ENCODE measurements at regions of chr2 and their contacts with region 1.

Region 1: DNA sequence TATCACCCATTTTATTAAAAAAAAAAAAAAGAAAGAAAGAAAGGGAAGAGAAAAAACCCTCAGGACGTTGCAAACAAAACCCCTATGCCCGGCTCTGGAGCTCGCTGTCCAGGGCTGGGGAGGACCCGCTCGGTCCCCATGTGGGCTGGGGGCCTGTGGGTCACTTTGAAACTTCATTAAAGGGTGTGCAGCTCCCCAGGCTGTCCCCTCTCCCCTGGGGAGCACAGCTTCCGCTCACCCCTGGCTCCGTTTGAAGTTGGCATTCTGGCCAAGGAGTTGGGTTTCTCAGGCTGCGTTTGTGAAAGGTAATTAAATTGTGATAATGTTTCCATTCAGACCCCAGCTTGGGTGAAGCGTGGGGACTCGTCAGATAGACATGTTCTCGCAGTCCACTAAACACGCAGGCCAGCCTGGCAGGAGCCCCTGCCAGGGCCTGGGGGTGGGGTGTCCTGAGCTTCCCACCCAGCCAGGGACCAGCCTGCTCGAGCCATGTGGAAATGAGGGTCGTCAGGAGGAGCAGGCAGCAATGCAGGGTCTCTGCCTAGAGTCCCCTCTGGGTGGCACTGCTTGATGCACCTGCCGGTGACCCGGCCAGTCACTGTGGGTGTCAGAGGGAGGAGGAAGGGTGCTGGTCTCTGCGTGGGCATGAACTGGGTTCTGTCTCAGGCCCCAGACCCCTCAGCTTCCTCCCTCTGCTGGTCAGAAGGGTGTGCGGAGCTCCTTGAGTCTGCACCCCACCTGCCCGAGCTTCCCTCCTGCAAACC is 166.2 kb downstream of the INHBB start:
- DNase-seq: no peak
- H3K4me3 ChIP-seq: no peak overlapping the region
- H3K27ac ChIP-seq: no peak overlapping the region
- H3K4me1 ChIP-seq: peaks cover 0 to 4% (median 1%) of the 10 kb centered on the region in 4 experiments; a peak in 3 of 7 replicates
- H3K27me3 ChIP-seq: peaks cover 0 to 14% (median 6%) of the 10 kb centered on the region in 4 experiments; a peak in 3 of 7 replicates
- CTCF ChIP-seq: peak; percentile 24 to 55 (median 44); a peak in 3 of 4 replicates
- EP300 ChIP-seq: no peak
- POLR2A ChIP-seq: no peak
- RAD21 ChIP-seq: peak; percentile 0 to 4; a peak in 1 of 4 replicates

Region 2: DNA sequence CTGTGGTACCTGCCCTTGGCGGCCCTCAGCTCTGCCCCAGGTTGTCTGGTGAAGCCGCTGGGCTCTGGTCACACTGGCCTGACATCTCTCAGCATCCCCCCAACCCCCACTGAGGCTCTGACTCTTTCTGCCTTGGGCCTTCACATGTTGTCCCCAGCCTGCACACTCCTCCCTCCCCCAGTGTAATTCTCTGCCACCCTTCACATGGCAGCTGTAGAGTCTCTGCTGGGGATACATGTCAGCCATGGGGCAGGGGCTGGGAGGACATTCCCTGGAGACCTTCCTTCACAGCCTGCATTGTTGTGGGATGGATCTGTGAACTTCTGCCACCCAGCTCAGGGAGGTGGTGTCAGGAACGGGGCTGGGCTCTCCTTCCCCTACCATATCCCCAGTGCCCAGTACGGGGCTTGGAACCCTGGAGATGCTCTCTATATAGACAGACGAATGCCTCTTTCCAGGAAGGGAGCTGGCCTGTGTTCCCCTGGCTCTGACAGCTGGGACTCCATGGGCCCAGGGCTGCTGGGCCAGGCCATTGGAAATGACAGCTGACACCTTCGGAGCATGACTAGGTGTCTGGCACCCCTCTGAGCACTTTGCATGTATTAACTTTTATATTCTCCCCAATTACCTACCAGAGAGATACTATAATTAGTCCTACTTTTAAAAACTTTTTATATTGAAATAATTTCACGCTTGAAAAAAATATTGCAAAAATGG is 14.7 kb before region 1 on chr2:
- CTCF ChIA-PET with region 1: interaction called, 13 read pairs
- POLR2A ChIA-PET with region 1: interaction called, 3 read pairs
- DNase-seq: no peak
- H3K4me3 ChIP-seq: no peak overlapping the region
- H3K27ac ChIP-seq: no peak overlapping the region
- H3K4me1 ChIP-seq: no peaks in the 10 kb centered on the region; a peak in 1 of 7 replicates
- H3K27me3 ChIP-seq: peaks cover 0 to 9% (median 5%) of the 10 kb centered on the region in 4 experiments; a peak in 4 of 7 replicates
- CTCF ChIP-seq: no peak
- EP300 ChIP-seq: no peak
- POLR2A ChIP-seq: no peak
- RAD21 ChIP-seq: no peak

Region 3: GRCh38 chr2:120531863-120532600 is 19.9 kb after region 1 on chr2:
- CTCF ChIA-PET with region 1: interaction called, 12 read pairs
- POLR2A ChIA-PET with region 1: no interaction called
- DNase-seq: no peak
- H3K4me3 ChIP-seq: no peak overlapping the region
- H3K27ac ChIP-seq: no peak overlapping the region
- H3K4me1 ChIP-seq: no peaks in the 10 kb centered on the region
- H3K27me3 ChIP-seq: peaks cover 0 to 7% (median 3%) of the 10 kb centered on the region in 4 experiments; a peak in 3 of 7 replicates
- CTCF ChIP-seq: no peak
- EP300 ChIP-seq: no peak
- POLR2A ChIP-seq: no peak
- RAD21 ChIP-seq: no peak